ENCODE measurements at regions of chr4 and their contacts with region 1.

Region 1: DNA sequence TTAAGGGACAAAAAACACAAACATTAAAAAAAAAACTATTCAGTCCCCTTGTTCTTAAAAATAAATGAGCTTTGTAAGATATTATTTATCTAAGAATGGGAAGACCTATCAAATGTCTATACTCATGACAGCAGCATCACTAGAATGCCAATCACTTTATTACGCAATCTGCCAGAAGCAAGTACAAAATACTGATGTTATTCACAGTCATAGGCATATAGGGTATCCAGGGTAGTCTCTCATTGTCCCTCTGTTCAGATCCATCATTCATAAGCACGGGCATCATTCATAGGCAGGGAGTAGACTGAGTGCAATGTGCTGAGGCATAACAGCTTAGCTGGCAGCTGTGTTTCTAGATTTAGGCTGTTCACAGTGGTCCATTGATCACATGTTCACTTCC is 109.1 kb downstream of the EPHA5 start:
- DNase-seq: no peak
- H3K4me3 ChIP-seq: no peak overlapping the region
- H3K27ac ChIP-seq: no peak overlapping the region
- H3K4me1 ChIP-seq: no peaks in the 10 kb centered on the region
- H3K27me3 ChIP-seq: no peaks in the 10 kb centered on the region
- CTCF ChIP-seq: no peak
- POLR2A ChIP-seq: no peak

Region 2: DNA sequence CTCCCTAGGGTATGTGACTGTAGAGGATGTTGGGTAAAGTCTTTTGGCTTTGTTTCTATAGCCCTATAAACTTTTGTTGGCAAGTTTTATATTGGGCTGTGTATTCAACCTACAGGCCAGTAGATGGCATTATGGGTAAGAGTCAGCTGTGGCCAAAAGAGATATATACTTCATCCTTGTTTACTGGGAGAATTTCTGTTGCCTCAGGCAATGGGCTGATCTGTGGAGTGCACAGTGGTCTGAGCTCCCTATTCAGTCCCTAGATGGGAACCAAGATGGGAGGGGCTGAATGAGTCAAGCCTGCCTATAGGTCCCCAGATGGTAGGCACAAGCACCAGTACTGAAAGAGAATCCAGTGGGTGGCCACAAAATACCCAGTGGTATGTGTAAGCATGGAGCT is 471.5 kb before region 1 on chr4:
- intact Hi-C with region 1: loop called (anchors 5 kb)
- DNase-seq: no peak
- H3K4me3 ChIP-seq: no peak overlapping the region
- H3K27ac ChIP-seq: no peak overlapping the region
- H3K4me1 ChIP-seq: no peaks in the 10 kb centered on the region
- H3K27me3 ChIP-seq: no peaks in the 10 kb centered on the region
- CTCF ChIP-seq: no peak
- POLR2A ChIP-seq: no peak